ENCODE measurements at regions of chr5 and their contacts with region 1.

Region 1: DNA sequence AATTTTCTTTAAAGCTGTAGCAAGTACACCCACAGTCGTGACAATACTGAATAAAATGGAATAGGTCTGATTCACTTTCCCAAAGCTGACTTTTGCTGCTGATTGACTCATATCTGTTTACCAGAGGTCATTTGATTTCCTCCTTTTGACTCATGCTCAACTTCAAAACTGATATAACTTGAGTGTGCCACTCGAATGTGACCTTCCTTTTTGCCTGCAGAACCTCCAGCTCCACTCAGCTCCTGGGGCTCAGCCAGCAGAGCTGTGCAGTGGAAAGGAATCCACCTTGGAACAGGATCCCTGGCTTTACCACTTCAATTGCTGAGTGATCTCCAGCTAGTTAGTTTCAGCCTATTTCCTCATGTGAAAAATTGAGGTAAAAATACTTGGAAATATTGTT is 84.1 kb downstream of the FEM1C start:
- DNase-seq: peak; percentile 89
- ATAC-seq: peak; percentile 91

Region 2: DNA sequence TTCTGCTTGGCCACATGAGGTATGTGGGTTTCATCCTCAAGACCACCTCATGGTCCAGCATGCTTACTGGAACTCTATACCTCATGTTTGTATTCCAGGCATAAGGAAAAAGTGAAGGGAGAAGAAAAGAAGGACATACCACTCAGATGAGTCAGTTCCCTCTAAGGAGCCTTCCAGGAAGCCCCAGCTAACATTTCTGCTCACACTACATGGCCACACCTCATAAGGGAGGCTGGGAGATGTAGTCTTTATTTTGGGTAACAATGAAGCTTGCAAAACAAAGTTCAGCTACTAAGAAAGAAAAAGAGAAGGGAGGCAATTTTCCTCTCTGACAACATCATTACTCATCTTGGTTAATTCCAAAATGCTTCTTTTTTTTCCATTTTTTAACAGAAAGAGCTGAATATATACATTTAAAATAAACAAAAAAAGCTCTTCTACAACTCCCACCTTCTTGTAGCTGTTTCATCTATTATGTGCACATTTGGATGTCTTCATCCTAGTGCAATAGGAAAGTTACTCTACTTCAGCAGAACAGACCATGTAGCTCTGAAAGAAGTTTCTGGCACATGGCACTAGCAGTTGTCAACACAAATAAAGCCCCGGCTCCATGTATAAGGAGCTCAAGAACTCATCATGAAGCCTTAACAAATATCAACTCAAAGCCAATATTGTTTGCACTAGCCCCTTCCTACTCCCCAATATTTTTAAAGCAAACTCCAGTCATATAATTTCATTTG is 40.5 kb before region 1 on chr5:
- intact Hi-C with region 1: loop called (anchors 5 kb)
- DNase-seq: no peak
- ATAC-seq: no peak

Region 3: DNA sequence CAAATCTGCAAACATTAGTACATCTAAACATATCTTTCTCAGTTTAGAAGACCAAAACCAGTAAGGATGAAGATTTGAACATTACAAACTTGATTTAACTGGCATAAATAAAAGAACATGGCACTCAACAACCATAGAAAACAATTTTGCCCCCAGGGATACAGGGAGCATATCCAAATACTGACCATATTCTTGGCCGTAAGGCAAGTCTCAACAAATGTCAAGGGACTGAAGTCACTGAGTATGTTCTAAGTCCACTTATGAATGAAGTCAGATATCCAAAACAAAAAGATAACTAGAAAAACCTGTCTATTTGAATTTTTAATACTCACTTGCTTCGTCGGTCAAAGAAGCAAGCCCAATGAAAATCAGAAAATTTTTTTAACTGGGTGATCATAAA is 70.0 kb after region 1 on chr5:
- intact Hi-C with region 1: loop called (anchors 10 kb)
- DNase-seq: no peak
- ATAC-seq: peak; percentile 54